Activated naive CD4-positive, alpha-beta T cell treated with anti-CD3 and anti-CD28 coated beads for 36 hours (primary cell): ENCODE measurements at regions of chr6 and their contacts with region 1.

Region 1: GRCh38 chr6:28474441-28475219 is 31.3 kb upstream of the ZSCAN23 start:
- DNase-seq: peak; percentile 42
- H3K4me3 Mint-ChIP-seq: peak overlapping the region; percentile 68
- H3K27ac Mint-ChIP-seq: peak overlapping the region; percentile 36
- H3K4me1 Mint-ChIP-seq: peaks cover 13% of the 10 kb centered on the region
- H3K27me3 Mint-ChIP-seq: peaks cover 40% of the 10 kb centered on the region

Region 2: DNA sequence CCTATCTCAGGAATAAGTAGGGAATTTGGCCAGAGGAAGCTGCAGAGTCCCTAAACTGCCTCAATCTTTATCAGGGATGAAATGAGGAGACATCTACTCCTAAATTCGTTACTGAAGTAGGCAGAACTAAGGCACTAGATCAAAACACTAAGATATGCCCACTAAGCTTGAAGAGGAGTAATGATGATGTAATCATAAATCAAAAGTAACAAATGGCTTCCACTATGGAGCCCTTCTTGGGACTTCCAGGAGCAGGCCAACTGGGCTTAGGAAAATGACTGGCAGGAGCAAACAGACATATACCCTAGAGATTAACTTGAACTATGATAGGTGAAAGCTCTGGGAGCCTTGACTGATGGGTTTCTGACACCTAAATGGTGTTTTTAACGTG is 90.5 kb before region 1 on chr6:
- CTCF ChIA-PET with region 1: no interaction called
- intact Hi-C with region 1: no loop called
- DNase-seq: no peak
- H3K4me3 Mint-ChIP-seq: no peak overlapping the region
- H3K27ac Mint-ChIP-seq: no peak overlapping the region
- H3K4me1 Mint-ChIP-seq: peaks cover 17% of the 10 kb centered on the region
- H3K27me3 Mint-ChIP-seq: no peaks in the 10 kb centered on the region

Region 3: DNA sequence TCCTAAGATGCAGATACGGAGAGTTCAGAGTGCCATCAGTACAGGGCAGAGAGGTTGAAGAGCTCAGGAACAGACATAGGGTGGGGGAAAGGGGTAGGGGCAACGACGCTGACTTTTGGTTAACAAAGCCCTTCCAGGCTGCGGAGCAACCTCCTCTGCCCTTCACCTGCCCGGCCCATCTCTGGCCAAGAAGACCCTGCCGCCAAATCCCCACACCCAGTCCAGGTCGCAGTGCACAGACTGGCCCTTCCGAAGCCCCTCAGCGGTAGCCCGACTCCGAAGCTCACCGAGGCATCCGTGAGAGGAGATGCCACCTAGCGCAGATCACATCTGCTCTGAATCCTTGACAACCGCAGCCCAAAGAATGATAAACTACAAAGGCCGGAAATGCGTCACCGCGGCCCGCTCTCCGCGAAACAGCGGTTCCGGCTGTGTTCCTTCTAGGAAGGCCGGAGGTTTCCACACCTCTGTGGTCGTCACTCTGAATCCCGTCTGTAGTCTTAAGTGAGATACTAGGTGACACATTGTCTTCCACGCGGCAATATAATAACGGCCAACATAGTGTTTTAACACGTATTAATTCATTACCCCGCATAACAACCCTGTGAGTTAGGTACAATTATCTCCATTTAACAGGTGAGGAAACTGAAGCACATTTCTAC is 31.4 kb before region 1 on chr6 and contains the start of gene ZSCAN23:
- CTCF ChIA-PET with region 1: no interaction called
- intact Hi-C with region 1: loop called (anchors 1 kb)
- DNase-seq: peak; percentile 93
- H3K4me3 Mint-ChIP-seq: peak within 1 kb of the TSS; percentile 98
- H3K27ac Mint-ChIP-seq: peak within 1 kb of the TSS; percentile 87
- H3K4me1 Mint-ChIP-seq: peaks cover 31% of the 10 kb centered on the region
- H3K27me3 Mint-ChIP-seq: peaks cover 24% of the 10 kb centered on the region
- total RNA-seq, gene ZSCAN23: 1.7 to 2.0 TPM

Region 4: DNA sequence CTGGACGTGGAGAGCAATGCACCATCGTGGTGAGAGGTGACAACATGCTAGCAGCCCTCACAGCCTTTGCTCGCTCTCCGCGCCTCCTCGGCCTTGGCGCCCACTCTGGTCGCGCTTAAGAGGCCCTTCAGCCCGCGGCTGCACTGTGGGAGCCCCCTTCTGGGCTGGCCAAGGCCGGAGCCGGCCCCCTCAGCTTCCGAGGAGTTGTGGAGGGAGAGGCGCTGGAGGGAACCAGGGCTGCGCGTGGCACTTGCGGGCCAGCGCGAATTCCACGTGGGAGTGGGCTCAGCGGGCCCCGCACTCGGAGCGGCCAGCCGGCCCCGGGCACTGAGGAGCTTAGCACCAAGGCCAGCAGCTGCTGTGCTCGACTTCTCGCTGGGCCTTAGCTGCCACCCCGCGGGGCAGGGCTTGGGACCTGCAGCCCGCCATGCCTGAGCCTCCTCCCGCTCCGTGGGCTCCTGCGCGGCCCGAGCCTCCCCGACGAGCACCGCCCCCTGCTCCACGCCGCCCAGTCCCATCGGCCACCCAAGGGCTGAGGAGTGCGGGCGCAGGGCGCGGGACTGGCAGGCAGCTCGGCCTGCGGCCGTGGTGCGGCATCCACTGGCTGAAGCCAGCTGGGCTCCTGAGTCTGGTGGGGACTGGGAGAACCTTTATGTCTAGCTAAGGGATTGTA is 37.1 kb after region 1 on chr6:
- CTCF ChIA-PET with region 1: no interaction called
- intact Hi-C with region 1: no loop called
- DNase-seq: no peak
- H3K4me3 Mint-ChIP-seq: no peak overlapping the region
- H3K27ac Mint-ChIP-seq: no peak overlapping the region
- H3K4me1 Mint-ChIP-seq: peaks cover 9% of the 10 kb centered on the region
- H3K27me3 Mint-ChIP-seq: peaks cover 11% of the 10 kb centered on the region

Region 5: DNA sequence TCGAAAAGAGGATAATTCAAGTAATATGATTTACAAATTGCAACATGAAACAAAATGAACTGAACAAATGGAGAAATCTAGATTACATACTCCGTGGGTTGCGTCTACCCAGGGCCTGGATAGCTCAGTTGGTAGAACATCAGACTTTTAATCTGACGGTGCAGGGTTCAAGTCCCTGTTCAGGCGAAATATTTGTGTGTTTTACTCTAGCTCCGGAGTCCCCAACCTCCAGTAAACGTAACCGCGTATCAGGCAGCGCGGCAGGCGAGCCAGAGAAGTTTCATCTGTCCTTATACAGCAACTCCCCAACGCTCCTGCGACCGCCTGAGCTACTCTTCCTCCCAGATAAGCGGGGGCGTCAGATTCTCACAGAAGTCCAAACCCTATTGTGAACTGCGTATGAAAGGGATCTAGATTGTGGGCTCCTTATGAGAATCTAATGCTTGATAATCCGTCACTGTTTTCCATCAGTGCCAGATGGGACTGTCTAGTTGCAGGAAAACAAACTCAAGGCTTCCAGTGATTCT is 273.1 kb after region 1 on chr6:
- CTCF ChIA-PET with region 1: no interaction called
- intact Hi-C with region 1: no loop called
- DNase-seq: no peak
- H3K4me3 Mint-ChIP-seq: no peak overlapping the region
- H3K27ac Mint-ChIP-seq: no peak overlapping the region
- H3K4me1 Mint-ChIP-seq: no peaks in the 10 kb centered on the region
- H3K27me3 Mint-ChIP-seq: peaks cover 65% of the 10 kb centered on the region

Region 6: GRCh38 chr6:28789553-28790083 is 315.0 kb after region 1 on chr6:
- CTCF ChIA-PET with region 1: no interaction called
- intact Hi-C with region 1: no loop called
- DNase-seq: peak; percentile 42
- H3K4me3 Mint-ChIP-seq: peak overlapping the region; percentile 69
- H3K27ac Mint-ChIP-seq: peak overlapping the region; percentile 10
- H3K4me1 Mint-ChIP-seq: peaks cover 14% of the 10 kb centered on the region
- H3K27me3 Mint-ChIP-seq: peaks cover 86% of the 10 kb centered on the region